ENCODE measurements at regions of chrX and their contacts with region 1.

Region 1: GRCh38 chrX:115642895-115643530 is 82.0 kb downstream of the PLS3 start:
- DNase-seq: peak; percentile 38
- H3K4me3 Mint-ChIP-seq: no peak overlapping the region
- H3K27ac Mint-ChIP-seq: no peak overlapping the region
- H3K4me1 Mint-ChIP-seq: no peaks in the 10 kb centered on the region
- H3K27me3 Mint-ChIP-seq: no peaks in the 10 kb centered on the region
- CTCF ChIP-seq: peak; percentile 64

Region 2: GRCh38 chrX:115372152-115372551 is 270.9 kb before region 1 on chrX:
- CTCF ChIA-PET with region 1: no interaction called
- intact Hi-C with region 1: no loop called
- DNase-seq: no peak
- H3K4me3 Mint-ChIP-seq: no peak overlapping the region
- H3K27ac Mint-ChIP-seq: no peak overlapping the region
- H3K4me1 Mint-ChIP-seq: peaks cover 11% of the 10 kb centered on the region
- H3K27me3 Mint-ChIP-seq: no peaks in the 10 kb centered on the region
- CTCF ChIP-seq: no peak

Region 3: DNA sequence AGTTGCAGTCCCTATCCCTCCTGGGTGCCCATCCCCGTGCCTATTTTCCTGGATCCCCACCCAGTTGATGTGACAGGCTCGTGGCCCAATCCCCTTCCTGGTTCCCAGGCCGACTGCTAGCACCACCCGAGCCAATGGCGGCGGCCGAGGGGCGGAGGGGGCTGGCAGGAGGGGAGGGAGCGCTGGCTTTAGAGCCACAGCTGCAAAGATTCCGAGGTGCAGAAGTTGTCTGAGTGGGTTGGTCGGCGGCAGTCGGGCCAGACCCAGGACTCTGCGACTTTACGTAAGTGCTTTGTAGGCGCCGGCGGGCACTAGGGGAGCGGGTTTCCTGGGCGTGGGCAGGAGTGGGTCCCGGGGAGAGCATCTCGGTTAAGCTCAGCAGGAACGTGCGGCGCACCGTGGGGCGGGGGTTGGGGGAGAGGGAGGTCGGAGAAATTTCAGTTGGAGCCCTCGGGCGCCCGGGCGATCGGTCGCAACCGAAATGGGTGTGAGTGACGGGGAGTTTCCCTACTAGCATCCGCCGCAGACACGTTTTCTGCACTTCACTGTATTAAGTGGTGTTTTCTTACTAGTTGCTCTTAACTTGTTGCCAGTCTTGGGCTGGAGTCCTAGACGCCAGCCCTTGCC is 81.9 kb before region 1 on chrX and contains the start of gene PLS3:
- CTCF ChIA-PET with region 1: no interaction called
- intact Hi-C with region 1: loop called (anchors 5 kb)
- DNase-seq: peak; percentile 88
- H3K4me3 Mint-ChIP-seq: peak within 1 kb of the TSS; percentile 86
- H3K27ac Mint-ChIP-seq: peak within 1 kb of the TSS; percentile 92
- H3K4me1 Mint-ChIP-seq: peaks cover 20% of the 10 kb centered on the region
- H3K27me3 Mint-ChIP-seq: no peaks in the 10 kb centered on the region
- CTCF ChIP-seq: no peak
- total RNA-seq, gene PLS3: 169 and 174 TPM in 2 replicates